ENCODE measurements at regions of chr11 and their contacts with region 1.

Region 1: GRCh38 chr11:94504689-94505293 is 7.5 kb upstream of the C11orf97 start:
- DNase-seq: peak; percentile 77
- H3K4me3 Mint-ChIP-seq: no peak overlapping the region
- H3K27ac Mint-ChIP-seq: no peak overlapping the region
- H3K4me1 Mint-ChIP-seq: no peaks in the 10 kb centered on the region
- H3K27me3 Mint-ChIP-seq: peaks cover 10% of the 10 kb centered on the region

Region 2: GRCh38 chr11:93895106-93895862 is 609.5 kb before region 1 on chr11:
- intact Hi-C with region 1: loop called (anchors 5 kb)
- DNase-seq: peak; percentile 61
- H3K4me3 Mint-ChIP-seq: no peak overlapping the region
- H3K27ac Mint-ChIP-seq: no peak overlapping the region
- H3K4me1 Mint-ChIP-seq: no peaks in the 10 kb centered on the region
- H3K27me3 Mint-ChIP-seq: peaks cover 12% of the 10 kb centered on the region

Region 3: DNA sequence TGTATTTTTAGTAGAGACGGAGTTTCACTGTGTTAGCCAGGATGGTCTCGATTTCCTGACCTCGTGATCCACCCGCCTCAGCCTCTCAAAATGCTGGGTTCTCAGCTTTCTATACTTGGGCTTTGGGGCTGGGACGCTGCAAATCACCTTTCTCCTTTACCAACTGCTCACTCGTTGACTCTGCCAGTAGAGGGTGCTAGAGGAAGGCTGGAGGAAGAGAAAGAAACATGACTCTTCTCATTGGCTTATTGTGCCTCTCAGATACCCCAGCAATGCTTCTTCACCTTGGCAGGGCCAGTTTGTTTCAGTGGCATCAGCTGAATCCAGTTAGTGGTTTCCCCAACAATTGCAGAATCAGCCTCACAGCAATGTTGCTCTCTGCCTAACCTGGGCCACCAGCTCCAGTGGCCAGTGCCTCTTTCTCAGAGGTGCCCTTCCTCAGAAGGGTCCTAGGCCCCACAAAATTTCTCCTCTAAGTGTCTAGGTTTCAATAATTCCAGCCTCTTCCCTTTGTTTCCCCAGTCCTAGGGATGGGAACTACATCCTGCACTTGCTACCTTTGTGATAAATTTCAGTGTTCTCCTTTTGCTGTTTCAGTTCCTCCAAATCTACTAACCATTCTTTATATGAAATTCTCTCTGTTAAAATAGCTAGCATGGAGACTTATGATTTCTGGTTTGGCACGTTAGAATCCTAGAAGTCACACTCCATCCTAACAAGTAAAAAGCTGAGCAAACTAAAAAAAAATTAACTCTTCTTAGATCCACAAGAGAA is 582.9 kb before region 1 on chr11:
- intact Hi-C with region 1: loop called (anchors 1 kb)
- DNase-seq: peak; percentile 79
- H3K4me3 Mint-ChIP-seq: no peak overlapping the region
- H3K27ac Mint-ChIP-seq: no peak overlapping the region
- H3K4me1 Mint-ChIP-seq: no peaks in the 10 kb centered on the region
- H3K27me3 Mint-ChIP-seq: peaks cover 10% of the 10 kb centered on the region

Region 4: DNA sequence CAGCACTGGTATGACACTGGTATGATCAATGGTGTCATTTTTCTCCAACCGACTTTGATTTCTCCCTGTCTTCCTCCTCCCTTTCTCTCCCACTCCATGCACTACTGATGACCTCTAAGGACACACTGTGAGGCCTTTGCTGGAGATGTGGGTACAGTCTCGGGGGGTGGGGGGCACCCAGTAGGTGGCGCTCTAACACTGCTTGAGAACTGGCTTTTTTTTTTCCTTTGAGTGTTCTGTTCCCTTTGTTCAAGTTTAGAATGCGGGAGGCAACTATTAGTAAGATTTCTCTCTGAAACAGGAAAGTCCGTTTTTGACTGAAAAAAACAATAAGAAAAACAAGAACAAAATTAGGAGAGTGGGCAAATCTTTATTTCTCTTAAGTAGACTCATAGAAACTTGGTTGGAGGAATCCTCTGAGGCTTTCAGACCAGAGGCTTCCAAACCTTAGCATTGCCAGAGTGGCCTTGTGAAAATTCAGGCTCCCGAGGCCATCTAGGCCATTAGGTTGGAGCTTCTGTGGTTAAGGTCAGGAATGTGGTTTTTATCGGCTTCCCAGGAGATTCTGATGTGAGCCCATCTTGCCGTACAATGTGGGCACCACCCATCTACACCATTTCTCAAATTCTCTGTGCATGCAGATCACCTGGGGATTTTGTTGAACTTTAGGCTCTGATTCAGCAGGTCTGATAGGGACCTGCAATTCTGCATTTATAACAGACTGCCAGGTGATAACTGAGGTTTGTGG is 332.9 kb before region 1 on chr11:
- intact Hi-C with region 1: loop called (anchors 1 kb)
- DNase-seq: peak; percentile 71
- H3K4me3 Mint-ChIP-seq: no peak overlapping the region
- H3K27ac Mint-ChIP-seq: no peak overlapping the region
- H3K4me1 Mint-ChIP-seq: peaks cover 4% of the 10 kb centered on the region
- H3K27me3 Mint-ChIP-seq: no peaks in the 10 kb centered on the region

Region 5: DNA sequence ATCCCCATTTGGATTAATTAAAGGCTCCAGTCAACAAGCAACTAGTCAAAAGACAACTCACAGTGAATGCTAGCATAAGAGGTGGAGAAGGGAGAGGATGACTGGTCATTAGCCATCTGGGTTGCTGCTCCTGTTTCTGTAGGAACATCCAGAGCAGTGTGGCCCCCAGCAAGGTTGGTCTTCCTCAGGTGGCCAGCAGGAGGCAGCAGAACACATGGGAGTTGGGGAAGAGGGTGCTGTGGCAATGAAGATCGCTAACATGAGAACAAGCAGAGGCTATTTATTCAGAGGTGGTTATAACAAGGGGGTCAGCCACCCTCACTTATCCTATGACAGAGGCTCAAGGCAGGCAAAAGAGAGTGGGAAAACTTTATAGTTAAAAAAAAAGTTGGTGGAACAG is 179.1 kb before region 1 on chr11:
- intact Hi-C with region 1: loop called (anchors 1 kb)
- DNase-seq: peak; percentile 89
- H3K4me3 Mint-ChIP-seq: no peak overlapping the region
- H3K27ac Mint-ChIP-seq: no peak overlapping the region
- H3K4me1 Mint-ChIP-seq: no peaks in the 10 kb centered on the region
- H3K27me3 Mint-ChIP-seq: peaks cover 5% of the 10 kb centered on the region

Measured in activated CD4-positive, alpha-beta T cell treated with anti-CD3 and anti-CD28 coated beads, Interleukin-2, amount 10 ng/mL, durations not matched to agents 24 days and 14 days (primary cell).